Endothelial cell of umbilical vein (primary cell): ENCODE measurements at regions of chr6 and their contacts with region 1.

Region 1: DNA sequence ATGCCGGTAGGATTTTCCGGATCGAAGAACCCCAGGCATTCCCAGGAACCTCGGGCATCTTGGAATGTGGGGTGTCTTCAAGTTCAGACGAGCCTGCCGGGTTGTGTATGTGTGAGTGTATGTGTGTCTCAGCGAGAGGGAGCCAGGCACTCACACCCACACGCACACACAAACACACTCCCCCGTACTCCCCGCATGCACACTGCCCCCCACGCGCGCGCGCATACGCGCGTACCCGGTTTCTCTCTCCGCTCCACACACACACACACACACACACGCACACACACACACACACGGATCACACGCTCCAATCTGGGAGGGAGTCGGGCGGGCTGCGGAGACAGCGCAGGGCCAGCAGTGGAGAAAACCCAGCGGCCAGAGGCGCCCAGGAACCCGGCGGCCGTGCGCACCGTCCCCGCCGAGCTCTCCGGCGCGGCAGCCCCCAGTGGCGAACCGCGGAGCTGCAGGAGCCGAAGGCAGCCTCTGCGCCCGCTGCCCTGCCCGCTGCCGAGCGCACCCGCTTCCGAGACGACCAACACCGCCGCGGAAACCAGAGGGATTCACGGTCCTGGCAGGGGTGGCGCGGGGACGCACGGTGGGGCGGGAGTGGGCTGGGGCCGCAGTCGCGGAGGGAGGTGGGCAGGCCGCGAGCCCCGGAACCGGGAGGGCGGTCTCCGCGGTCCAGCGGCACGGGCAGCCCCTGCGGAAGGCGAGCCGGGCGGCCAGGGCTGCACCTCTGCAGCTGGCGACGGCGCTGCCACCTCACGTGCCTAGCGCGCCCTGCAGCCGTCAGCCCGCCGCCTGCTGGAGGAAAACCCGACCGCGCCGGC is at the start of gene LRFN2:
- DNase-seq: peak; percentile 62
- H3K4me3 ChIP-seq: peak within 1 kb of the TSS in 2 of 3 experiments; percentile 30 to 48
- H3K27ac ChIP-seq: no peak within 1 kb of the TSS
- H3K4me1 ChIP-seq: no peaks in the 10 kb centered on the region
- H3K27me3 ChIP-seq: peaks cover 27 to 29% of the 10 kb centered on the region in 2 experiments
- CTCF ChIP-seq: peak; percentile 39 to 70
- POLR2A ChIP-seq: no peak
- total RNA-seq, gene LRFN2: not detected in 2 replicates

Region 2: DNA sequence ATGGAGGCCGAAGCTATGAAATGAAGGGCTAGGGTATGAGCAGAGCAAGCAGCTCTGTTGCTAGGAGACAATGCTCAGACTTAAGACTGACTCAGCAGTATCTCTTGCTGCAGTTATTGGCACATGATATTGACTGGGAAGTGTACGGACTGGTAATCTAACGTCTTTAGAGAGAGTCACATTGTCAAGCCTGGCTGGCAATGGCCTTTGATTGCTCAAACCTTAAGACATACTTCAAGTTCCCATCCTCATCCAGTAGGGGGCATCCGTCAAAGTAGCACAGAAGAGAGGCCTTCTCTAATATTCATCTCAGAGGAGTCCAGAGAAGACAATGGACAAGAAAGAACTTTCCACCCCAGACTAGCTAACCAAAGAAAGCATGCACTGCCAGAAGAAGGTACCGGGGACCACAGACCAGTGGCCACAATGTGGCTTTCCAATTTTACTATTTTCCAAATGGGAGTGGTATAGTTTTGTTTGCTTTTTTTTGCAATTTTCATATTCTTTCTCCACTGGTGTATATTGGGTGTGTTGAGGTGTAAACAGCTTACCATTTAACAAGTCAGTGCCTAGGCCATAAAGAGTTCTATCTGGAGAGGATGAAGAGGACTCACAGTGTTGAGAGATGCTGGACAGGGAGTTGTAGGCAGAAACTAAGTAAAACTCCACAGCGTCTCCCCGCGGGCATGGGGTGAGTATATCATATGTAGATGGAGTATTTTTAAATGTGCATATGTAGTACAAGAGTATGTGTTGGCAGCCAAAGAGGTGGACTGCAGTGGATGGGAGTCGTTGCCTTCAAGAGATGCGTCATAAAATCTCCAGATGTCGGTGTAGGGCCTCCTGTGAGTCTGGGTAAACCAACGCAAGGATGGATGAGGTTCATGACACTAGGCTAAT is 37.0 kb before region 1 on chr6:
- CTCF ChIA-PET with region 1: interaction called, 10 read pairs
- POLR2A ChIA-PET with region 1: no interaction called
- dilution Hi-C with region 1: no loop called
- intact Hi-C with region 1: loop called (anchors 5 kb)
- DNase-seq: peak; percentile 46
- H3K4me3 ChIP-seq: no peak overlapping the region
- H3K27ac ChIP-seq: no peak overlapping the region
- H3K4me1 ChIP-seq: no peaks in the 10 kb centered on the region
- H3K27me3 ChIP-seq: no peaks in the 10 kb centered on the region
- CTCF ChIP-seq: peak; percentile 56 to 70
- POLR2A ChIP-seq: no peak

Region 3: DNA sequence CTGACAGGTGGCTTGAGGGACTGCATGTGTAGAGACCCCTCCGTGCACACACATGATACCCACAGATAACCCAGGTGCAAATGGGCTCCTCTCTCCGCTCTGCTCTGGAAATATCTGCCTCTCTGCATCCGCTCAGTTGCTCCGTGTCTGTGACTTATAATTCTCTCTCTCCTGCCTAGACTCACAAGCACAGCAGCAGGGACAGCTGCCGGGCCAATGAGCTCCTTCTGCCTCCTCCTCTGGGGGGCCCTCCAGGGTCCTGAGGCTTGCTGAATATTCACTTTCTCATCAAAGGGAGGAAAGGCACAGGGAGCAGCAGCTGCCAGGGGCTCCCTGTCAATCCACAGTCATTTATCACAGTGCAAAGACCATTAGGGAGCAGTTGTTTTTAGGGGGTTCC is 24.3 kb before region 1 on chr6:
- CTCF ChIA-PET with region 1: interaction called, 11 read pairs
- POLR2A ChIA-PET with region 1: no interaction called
- dilution Hi-C with region 1: no loop called
- intact Hi-C with region 1: no loop called
- DNase-seq: no peak
- H3K4me3 ChIP-seq: no peak overlapping the region
- H3K27ac ChIP-seq: no peak overlapping the region
- H3K4me1 ChIP-seq: no peaks in the 10 kb centered on the region
- H3K27me3 ChIP-seq: no peaks in the 10 kb centered on the region
- CTCF ChIP-seq: no peak
- POLR2A ChIP-seq: no peak

Region 4: GRCh38 chr6:40573221-40573620 is 14.2 kb before region 1 on chr6:
- CTCF ChIA-PET with region 1: interaction called, 13 read pairs
- POLR2A ChIA-PET with region 1: no interaction called
- dilution Hi-C with region 1: no loop called
- intact Hi-C with region 1: no loop called
- DNase-seq: no peak
- H3K4me3 ChIP-seq: no peak overlapping the region
- H3K27ac ChIP-seq: no peak overlapping the region
- H3K4me1 ChIP-seq: no peaks in the 10 kb centered on the region
- H3K27me3 ChIP-seq: no peaks in the 10 kb centered on the region
- CTCF ChIP-seq: no peak
- POLR2A ChIP-seq: no peak